HepG2 (cell line): ENCODE measurements at regions of chr1 and their contacts with region 1.

Region 1: DNA sequence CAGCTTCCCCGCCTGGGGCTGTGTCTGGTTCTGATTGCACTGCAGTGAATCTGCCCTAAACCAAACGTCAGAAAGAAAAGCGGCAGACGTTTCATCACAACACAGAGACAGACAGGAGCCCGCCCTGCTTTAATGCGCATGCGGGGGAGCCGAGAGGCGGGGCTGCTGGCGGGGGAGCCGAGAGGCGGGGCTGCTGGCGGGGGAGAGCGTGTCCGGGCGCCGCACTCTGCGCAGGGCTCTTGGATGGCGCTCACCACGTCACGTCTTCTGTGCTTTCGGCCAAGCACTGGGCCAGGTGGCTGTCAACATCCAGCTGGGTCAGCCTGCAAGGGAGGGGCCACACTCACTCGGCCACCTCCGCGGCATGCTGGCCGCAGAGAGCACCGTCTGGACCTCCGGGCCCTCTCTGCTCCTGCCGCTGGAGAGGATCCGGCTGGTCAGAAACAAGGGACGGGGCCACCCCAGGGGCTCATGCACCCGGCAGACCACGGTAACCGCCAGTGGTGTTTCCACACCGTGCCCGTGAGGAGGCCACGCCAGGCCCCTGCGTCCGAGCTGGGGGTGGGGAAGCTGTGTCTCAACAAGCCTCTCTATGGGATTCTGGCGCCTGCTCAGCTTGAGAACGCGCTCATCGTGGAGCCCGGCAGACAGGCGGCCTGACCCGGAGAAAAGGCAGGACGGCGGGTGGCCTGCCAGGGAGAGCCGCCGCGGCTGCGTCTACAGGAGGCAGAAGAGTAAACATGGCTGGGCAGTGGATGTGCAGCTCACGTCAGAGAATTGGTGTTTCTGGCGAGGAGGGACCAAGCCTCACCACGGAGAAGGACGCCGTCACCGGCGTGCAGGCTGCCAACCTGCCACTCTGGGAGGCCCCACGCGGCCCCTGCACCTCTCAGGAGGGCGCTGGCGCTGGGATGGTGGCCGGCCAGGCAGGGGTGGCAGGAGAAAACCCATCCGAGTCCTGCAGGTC is 4.8 kb downstream of the FAAP20 start:
- DNase-seq: peak; percentile 93
- ATAC-seq: peak; percentile 89
- H3K4me3 ChIP-seq: peak overlapping the region; percentile 56 to 78 (median 70); a peak in 5 of 6 replicates
- H3K27ac ChIP-seq: peak overlapping the region; percentile 75
- H3K4me1 ChIP-seq: peaks cover 41% of the 10 kb centered on the region
- H3K27me3 ChIP-seq: no peaks in the 10 kb centered on the region
- CTCF ChIP-seq: 0 out of 2 replicates have a peak, but pooled peaks have one; percentile 2
- EP300 ChIP-seq: no peak
- POLR2A ChIP-seq: peak in 1 of 2 experiments; percentile 55; a peak in 1 of 4 replicates
- RAD21 ChIP-seq: no peak

Region 2: DNA sequence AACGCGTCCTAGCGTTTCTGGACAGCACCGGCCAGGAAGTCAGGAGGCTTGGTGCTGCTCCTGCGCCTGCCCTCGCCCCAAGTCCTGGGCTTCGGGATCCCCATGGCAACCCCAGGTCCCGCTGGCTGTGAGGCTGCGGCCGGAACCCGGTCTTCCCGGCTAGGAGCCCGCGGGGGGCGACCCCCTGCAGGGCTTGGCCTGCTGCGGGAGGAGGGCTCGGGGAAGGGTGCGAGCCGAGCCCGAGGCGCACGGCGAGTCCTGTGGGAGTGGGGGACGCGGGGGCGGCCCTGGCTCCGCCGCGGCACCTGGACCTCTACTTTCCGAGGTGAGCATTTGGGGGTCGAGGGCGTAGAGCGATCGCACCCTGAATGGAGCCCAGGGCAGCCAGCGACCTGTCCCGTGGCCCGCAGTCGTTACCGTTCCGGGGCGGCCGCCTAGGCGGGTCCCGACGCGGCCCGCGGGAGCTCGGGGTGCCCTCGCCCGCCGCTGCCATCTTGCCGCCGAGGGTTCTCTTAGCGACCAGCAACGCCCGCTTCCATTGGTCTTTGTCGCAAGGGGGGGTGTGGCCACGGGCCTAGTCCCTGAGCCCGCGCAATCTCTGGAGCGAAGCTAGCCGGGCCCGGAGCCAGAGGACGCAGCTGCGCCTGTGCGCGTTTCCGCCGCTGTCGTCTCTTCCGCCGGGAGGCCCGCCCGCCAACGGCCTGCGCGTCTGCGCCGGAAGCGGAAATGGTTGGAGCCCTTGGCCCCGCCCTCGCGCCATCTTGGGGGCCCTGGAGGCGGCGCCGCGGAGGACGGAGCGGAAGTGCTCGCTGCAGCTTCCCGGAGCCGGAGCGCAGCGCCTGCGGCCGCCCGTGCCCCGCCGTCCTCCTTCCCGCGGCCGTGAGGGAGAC is 201.5 kb after region 1 on chr1 and contains the starts of genes MORN1 and RER1:
- CTCF ChIA-PET with region 1: interaction called, 3 read pairs
- POLR2A ChIA-PET with region 1: interaction called, 14 read pairs
- in situ Hi-C with region 1: no loop called
- intact Hi-C with region 1: no loop called
- DNase-seq: peak; percentile 95
- ATAC-seq: peak; percentile 96
- H3K4me3 ChIP-seq: peak within 1 kb of the TSS; percentile 91 to 96 (median 94)
- H3K27ac ChIP-seq: peak within 1 kb of the TSS; percentile 54
- H3K4me1 ChIP-seq: peaks cover 34% of the 10 kb centered on the region
- H3K27me3 ChIP-seq: no peaks in the 10 kb centered on the region; a peak in 1 of 5 replicates
- CTCF ChIP-seq: no peak; the same call in 1 of the 2 replicates
- EP300 ChIP-seq: peak in 1 of 2 experiments; percentile 19; a peak in 1 of 4 replicates
- POLR2A ChIP-seq: peak in 1 of 2 experiments; percentile 65; a peak in 2 of 4 replicates
- RAD21 ChIP-seq: 0 out of 2 replicates have a peak, but pooled peaks have one; percentile 26
- total RNA-seq, gene MORN1: 3.9 and 6.5 TPM in 2 replicates
- total RNA-seq, gene RER1: 83.9 and 128 TPM in 2 replicates